IMR-90 (cell line): ENCODE measurements at regions of chr16 and their contacts with region 1.

Region 1: DNA sequence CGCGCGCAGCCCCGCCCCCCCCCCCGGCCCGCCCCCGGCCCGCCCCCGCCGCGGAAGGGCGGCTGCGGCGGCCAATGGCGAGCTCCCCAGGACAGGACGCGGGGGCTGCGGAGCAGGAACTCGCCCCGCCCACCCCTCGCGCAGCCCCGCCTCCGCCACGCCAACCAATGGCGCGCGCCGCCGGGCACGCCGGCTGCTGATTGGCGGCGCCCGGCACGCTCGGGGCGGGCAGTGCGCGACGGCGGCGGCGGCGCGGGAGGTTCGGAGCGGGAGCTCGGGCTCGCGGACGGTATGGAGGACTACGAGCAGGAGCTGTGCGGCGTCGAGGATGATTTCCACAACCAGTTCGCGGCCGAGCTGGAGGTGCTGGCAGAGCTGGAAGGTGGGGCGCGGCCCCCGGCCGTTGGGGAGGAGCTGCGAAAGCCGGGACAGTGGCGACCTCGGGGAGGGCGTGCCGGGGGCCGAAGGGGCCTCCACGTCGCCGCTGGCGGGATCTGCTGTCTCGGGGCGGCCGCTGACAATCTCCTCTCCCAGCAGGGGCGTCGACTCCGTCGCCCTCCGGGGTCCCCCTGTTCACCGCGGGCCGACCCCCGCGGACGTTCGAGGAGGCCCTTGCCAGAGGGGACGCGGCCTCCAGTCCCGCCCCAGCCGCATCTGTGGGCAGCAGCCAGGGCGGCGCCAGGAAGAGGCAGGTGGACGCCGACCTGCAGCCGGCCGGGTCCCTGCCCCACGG is at the start of gene CHTF18:
- DNase-seq: peak; percentile 86
- ATAC-seq: peak; percentile 96
- H3K4me3 ChIP-seq: peak within 1 kb of the TSS; percentile 99
- H3K27ac ChIP-seq: peak within 1 kb of the TSS; percentile 67
- H3K4me1 ChIP-seq: peaks cover 13% of the 10 kb centered on the region; the same call in 1 of the 2 replicates
- H3K27me3 ChIP-seq: no peaks in the 10 kb centered on the region
- CTCF ChIP-seq: no peak
- POLR2A ChIP-seq: no peak
- RAD21 ChIP-seq: no peak
- total RNA-seq, gene CHTF18: 3.1 and 3.2 TPM in 2 replicates

Region 2: GRCh38 chr16:714558-715476 is 73.7 kb before region 1 on chr16 and contains the start of gene METRN:
- CTCF ChIA-PET with region 1: interaction called, 6 read pairs
- POLR2A ChIA-PET with region 1: no interaction called
- dilution Hi-C with region 1: no loop called
- in situ Hi-C with region 1: loop called (anchors 5 kb)
- intact Hi-C with region 1: loop called (anchors 2 kb)
- DNase-seq: peak; percentile 78
- ATAC-seq: peak; percentile 83
- H3K4me3 ChIP-seq: peak within 1 kb of the TSS; percentile 70
- H3K27ac ChIP-seq: no peak within 1 kb of the TSS; the same call in 1 of the 2 replicates
- H3K4me1 ChIP-seq: peaks cover 14% of the 10 kb centered on the region
- H3K27me3 ChIP-seq: no peaks in the 10 kb centered on the region
- CTCF ChIP-seq: no peak
- POLR2A ChIP-seq: no peak
- RAD21 ChIP-seq: no peak
- total RNA-seq, gene METRN: 6.1 and 8.6 TPM in 2 replicates

Region 3: GRCh38 chr16:728131-728889 is 60.2 kb before region 1 on chr16:
- CTCF ChIA-PET with region 1: no interaction called
- POLR2A ChIA-PET with region 1: no interaction called
- dilution Hi-C with region 1: no loop called
- in situ Hi-C with region 1: no loop called
- intact Hi-C with region 1: loop called (anchors 5 kb)
- DNase-seq: peak; percentile 78
- ATAC-seq: peak; percentile 69
- H3K4me3 ChIP-seq: peak overlapping the region; percentile 62
- H3K27ac ChIP-seq: no peak overlapping the region; the same call in 1 of the 2 replicates
- H3K4me1 ChIP-seq: peaks cover 6% of the 10 kb centered on the region
- H3K27me3 ChIP-seq: no peaks in the 10 kb centered on the region
- CTCF ChIP-seq: no peak
- POLR2A ChIP-seq: peak; percentile 24; the same call in 1 of the 2 replicates
- RAD21 ChIP-seq: no peak

Region 4: DNA sequence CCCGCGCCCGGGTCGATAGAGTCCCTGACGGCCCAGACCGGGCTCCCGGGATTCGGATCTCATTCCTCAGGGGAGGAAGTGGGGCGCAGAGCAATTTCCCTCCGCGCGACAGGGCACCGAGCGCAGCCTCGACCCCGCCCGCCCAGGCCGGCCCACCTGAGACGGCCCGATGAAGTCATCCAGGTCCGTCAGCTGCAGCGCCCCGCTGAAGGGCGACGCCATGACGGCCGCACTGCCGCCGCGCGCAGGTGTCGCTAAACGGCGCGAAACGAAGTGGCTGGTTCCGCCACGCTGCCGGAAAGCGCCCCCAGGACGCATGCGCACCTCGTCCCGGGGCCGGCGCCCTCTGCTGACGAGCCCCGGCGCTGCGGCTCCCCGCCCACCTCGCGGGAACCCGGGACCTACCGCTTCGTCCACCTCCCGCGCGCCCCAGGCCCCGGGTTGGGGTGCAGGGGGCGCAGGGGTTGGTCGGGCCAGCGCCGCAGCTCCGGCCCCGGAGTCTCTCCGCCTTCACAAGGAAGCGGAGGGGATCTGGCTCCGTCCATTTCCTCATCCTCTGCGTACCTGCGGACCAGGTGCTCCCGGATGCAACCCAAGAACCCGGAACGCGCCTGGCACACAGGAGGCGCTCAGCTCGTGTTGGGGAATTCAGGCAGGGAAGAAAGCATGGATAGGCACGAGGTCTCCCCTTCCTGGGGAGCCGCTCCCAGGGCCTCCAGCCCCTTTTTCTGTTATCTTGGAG is 47.6 kb before region 1 on chr16 and contains the start of gene CIAO3:
- CTCF ChIA-PET with region 1: interaction called, 3 read pairs
- POLR2A ChIA-PET with region 1: no interaction called
- dilution Hi-C with region 1: no loop called
- in situ Hi-C with region 1: no loop called
- intact Hi-C with region 1: loop called (anchors 5 kb)
- DNase-seq: peak; percentile 89
- ATAC-seq: peak; percentile 96
- H3K4me3 ChIP-seq: peak within 1 kb of the TSS; percentile 76
- H3K27ac ChIP-seq: peak within 1 kb of the TSS; percentile 35; the same call in 1 of the 2 replicates
- H3K4me1 ChIP-seq: peaks cover 5% of the 10 kb centered on the region; the same call in 1 of the 2 replicates
- H3K27me3 ChIP-seq: no peaks in the 10 kb centered on the region
- CTCF ChIP-seq: peak; percentile 98
- POLR2A ChIP-seq: peak; percentile 36; the same call in 1 of the 2 replicates
- RAD21 ChIP-seq: peak; percentile 38
- total RNA-seq, gene CIAO3: 13.9 and 17.0 TPM in 2 replicates

Region 5: DNA sequence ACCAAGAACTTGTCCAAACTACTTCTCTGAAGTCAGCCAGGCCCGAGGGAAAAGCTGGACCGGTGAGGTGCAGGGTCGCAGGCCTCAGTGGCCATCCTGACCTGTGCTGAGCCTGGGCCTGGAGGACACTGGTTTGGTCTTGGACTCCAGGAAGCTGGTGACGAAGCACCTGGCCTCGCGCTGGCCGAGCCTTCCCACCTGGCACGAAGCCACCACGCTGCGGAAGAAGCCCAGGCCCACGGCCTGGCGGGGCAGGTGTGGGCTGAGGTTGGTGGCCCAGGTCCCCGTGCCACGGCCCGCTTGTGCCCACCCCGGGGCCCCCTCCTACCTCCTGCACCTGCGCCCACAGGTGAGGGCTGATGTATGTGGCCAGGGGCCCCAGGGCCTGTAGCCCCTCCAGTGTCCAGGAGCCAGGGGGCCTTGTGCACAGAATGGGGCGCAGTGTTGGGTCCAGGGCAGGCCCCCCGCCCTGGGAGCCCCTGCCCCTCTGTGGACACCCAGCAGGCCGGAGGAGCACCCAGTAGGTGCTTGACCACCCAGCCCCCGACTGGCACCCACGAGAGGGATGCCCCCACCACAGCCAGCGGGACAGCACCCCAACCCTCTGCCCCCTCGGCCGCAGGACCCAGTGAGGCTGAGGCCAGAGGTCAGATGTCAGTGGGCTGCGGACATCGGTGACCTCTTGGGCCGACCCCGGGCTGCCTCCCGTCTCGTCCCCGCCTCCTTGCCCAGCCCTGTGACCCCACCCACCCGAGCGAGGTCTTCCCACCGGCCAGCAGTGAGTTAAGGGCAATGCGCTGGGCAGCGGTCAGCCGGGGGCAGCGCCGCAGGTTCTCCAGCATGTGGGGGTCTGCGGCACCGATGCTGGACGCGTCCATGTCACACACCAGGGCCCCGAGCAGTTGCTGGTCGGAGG is 14.2 kb before region 1 on chr16:
- CTCF ChIA-PET with region 1: no interaction called
- POLR2A ChIA-PET with region 1: interaction called, 23 read pairs
- dilution Hi-C with region 1: no loop called
- in situ Hi-C with region 1: no loop called
- intact Hi-C with region 1: no loop called
- DNase-seq: no peak
- ATAC-seq: no peak
- H3K4me3 ChIP-seq: no peak overlapping the region
- H3K27ac ChIP-seq: no peak overlapping the region
- H3K4me1 ChIP-seq: no peaks in the 10 kb centered on the region
- H3K27me3 ChIP-seq: peaks cover 3% of the 10 kb centered on the region; the same call in 1 of the 2 replicates
- CTCF ChIP-seq: no peak
- POLR2A ChIP-seq: no peak
- RAD21 ChIP-seq: no peak